ENCODE measurements at regions of chr3 and their contacts with region 1.

Region 1: DNA sequence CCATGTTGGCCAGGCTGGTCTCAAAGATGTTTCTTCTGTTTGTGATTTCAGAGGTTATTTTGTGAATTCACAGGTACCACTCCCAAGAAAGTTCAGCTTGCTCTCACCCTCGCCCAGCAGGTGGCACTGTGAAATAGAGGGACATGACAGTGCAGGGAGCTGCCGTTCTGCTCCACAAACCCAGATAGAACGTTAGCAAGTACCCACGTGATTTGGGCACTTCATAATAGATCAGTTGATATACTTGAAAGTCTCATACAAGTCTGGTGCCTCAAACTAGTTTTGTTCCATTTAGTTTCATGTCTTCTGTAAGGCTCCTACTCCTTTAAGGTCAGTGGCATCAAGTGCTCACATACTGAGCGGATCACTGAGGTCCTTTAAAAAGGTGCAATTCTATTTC is 45.5 kb downstream of the FILIP1L start:
- DNase-seq: peak; percentile 90
- ATAC-seq: peak; percentile 79
- H3K4me3 ChIP-seq: no peak overlapping the region
- H3K27ac ChIP-seq: no peak overlapping the region
- H3K4me1 ChIP-seq: peaks cover 43% of the 10 kb centered on the region
- H3K27me3 ChIP-seq: no peaks in the 10 kb centered on the region
- CTCF ChIP-seq: peak; percentile 94

Region 2: GRCh38 chr3:100089812-100090668 is 21.2 kb after region 1 on chr3:
- CTCF ChIA-PET with region 1: interaction called, 3 read pairs
- POLR2A ChIA-PET with region 1: no interaction called
- intact Hi-C with region 1: loop called (anchors 1 kb)
- DNase-seq: peak; percentile 67
- ATAC-seq: peak; percentile 26; the same call in 1 of the 2 replicates
- H3K4me3 ChIP-seq: no peak overlapping the region
- H3K27ac ChIP-seq: no peak overlapping the region
- H3K4me1 ChIP-seq: peaks cover 62% of the 10 kb centered on the region
- H3K27me3 ChIP-seq: no peaks in the 10 kb centered on the region
- CTCF ChIP-seq: peak; percentile 69

Region 3: DNA sequence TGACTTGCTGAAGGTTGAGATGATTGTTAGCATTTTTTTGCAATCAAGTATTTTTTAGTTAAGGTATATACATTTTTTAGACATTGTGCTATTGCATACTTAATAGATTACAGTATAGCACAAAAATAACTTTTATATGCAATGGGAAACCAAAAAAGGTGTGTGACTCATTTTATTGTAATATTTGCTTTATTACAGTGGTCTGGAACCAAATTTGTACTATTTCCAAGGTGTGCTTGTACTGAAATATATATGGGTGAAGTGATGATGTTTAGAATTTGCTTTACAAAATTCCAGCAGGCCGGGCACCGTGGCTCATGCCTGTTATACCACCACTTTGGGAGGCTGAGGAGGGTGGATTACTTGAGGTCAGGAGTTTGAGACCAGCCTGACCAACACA is 162.8 kb after region 1 on chr3:
- CTCF ChIA-PET with region 1: no interaction called
- POLR2A ChIA-PET with region 1: no interaction called
- intact Hi-C with region 1: loop called (anchors 1 kb)
- DNase-seq: peak; percentile 97
- ATAC-seq: peak; percentile 97
- H3K4me3 ChIP-seq: no peak overlapping the region
- H3K27ac ChIP-seq: peak overlapping the region; percentile 69
- H3K4me1 ChIP-seq: peaks cover 16% of the 10 kb centered on the region
- H3K27me3 ChIP-seq: no peaks in the 10 kb centered on the region
- CTCF ChIP-seq: no peak

Region 4: GRCh38 chr3:100260685-100261484 is 192.1 kb after region 1 on chr3 and contains the start of gene TBC1D23:
- CTCF ChIA-PET with region 1: no interaction called
- POLR2A ChIA-PET with region 1: interaction called, 12 read pairs
- intact Hi-C with region 1: no loop called
- DNase-seq: peak; percentile 100
- ATAC-seq: peak; percentile 99
- H3K4me3 ChIP-seq: peak within 1 kb of the TSS; percentile 88
- H3K27ac ChIP-seq: peak within 1 kb of the TSS; percentile 70
- H3K4me1 ChIP-seq: peaks cover 46% of the 10 kb centered on the region
- H3K27me3 ChIP-seq: no peaks in the 10 kb centered on the region
- CTCF ChIP-seq: no peak
- total RNA-seq, gene TBC1D23: 25.6 and 37.9 TPM in 2 replicates

Measured in PC-3 (cell line).